Endothelial cell of umbilical vein (primary cell): ENCODE measurements at regions of chrX and their contacts with region 1.

Region 1: DNA sequence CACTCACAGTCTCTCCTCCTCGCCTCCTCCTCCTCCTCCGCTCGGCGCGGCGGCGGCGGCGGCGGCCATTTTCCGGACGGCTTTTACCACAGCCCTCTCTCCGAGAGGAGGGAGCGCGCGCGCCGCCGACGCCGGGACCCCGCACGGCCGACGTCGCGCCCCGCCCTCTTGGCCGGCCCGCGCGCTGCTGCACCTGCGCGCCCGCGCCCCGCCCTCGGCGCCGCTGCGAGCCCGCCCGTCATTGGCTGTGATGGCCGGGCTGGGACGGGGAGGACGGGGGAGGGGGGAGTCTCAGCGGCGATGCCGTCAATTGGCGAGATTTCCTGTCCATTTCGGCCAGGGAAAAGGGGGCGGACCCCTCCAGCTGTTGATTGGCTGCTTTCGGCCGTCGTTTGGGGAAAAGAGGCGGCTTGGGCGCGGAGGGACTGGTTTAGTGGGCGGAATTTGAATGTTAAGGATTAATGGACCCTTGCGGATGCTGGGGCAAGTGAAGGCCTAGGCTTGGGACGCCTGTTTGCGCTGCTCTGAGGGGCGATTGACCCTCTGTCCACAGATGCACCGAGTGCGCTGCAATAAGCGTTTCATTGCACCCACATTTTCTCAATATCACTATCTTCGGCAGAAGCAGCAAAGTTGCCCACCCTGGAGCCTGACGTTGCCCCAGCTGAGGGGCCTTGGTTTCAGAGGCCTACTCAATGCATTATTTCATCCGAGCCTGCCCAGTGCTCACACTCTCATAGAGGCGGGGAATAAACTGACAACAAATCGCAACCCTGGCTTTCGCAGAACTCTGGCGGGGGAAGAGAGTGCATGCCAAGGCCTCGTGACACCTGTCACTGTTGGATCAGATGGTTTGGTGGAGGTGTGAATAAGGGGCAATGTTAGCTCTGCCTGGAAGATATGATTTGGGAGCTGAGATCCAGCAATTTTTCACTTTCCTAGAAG is at the start of gene MECP2:
- DNase-seq: peak; percentile 92
- H3K4me3 ChIP-seq: peak within 1 kb of the TSS; percentile 71 to 76 (median 74)
- H3K27ac ChIP-seq: peak within 1 kb of the TSS; percentile 45
- H3K4me1 ChIP-seq: peaks cover 24% of the 10 kb centered on the region
- H3K27me3 ChIP-seq: peaks cover 0 to 3% of the 10 kb centered on the region in 2 experiments
- CTCF ChIP-seq: no peak
- POLR2A ChIP-seq: no peak
- total RNA-seq, gene MECP2: 40.9 and 45.3 TPM in 2 replicates

Region 2: DNA sequence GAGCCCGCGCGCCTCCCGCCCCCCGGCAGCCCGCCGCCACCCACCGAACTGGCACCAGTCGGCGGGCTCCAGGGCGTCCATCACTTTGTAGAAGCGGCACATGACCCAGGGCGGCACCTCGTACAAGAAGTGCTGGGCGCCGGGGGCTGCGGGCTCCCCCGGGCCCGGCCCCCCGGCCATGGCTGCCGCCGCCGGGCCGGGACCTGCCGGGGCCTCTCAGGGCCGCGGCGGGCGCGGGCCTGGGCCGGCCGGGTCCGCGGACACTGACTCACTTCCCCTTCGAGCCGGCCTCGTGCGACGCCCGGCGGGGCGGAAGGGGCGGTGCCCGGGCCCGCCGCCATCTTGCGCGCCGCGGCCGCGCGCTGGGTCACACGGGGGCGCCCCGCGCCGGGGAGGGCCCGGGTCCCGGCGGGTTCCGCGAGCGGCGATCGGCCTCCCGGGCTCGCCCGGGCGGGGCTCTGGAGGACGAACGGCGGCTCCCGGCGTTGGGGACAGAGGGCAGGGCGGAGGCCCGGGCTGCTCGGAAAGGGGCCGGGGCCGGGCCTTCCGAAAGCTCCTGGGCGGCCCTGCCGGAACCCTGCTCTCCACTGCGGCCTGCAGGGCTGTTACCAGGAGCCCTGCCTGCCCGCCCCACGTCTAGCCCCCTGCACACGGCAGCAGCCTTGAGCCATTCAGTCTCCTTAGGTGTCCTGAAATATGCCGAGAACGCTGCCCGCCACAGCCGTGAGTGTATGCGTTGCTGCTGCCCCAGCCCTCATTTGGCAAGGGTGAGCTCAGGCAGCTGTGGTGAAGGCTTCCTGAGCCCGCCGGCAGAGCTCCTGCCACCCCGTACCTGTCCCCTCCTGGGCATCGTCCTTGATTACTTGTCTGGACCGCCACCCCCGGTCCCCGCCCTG is 78.0 kb before region 1 on chrX and contains the start of gene IRAK1:
- CTCF ChIA-PET with region 1: no interaction called
- POLR2A ChIA-PET with region 1: no interaction called
- dilution Hi-C with region 1: no loop called
- intact Hi-C with region 1: loop called (anchors 2 kb)
- DNase-seq: peak; percentile 37
- H3K4me3 ChIP-seq: peak within 1 kb of the TSS; percentile 44 to 69 (median 59)
- H3K27ac ChIP-seq: peak within 1 kb of the TSS; percentile 90
- H3K4me1 ChIP-seq: peaks cover 25% of the 10 kb centered on the region
- H3K27me3 ChIP-seq: no peaks in the 10 kb centered on the region
- CTCF ChIP-seq: no peak
- POLR2A ChIP-seq: no peak
- total RNA-seq, gene IRAK1: 136 and 138 TPM in 2 replicates

Region 3: DNA sequence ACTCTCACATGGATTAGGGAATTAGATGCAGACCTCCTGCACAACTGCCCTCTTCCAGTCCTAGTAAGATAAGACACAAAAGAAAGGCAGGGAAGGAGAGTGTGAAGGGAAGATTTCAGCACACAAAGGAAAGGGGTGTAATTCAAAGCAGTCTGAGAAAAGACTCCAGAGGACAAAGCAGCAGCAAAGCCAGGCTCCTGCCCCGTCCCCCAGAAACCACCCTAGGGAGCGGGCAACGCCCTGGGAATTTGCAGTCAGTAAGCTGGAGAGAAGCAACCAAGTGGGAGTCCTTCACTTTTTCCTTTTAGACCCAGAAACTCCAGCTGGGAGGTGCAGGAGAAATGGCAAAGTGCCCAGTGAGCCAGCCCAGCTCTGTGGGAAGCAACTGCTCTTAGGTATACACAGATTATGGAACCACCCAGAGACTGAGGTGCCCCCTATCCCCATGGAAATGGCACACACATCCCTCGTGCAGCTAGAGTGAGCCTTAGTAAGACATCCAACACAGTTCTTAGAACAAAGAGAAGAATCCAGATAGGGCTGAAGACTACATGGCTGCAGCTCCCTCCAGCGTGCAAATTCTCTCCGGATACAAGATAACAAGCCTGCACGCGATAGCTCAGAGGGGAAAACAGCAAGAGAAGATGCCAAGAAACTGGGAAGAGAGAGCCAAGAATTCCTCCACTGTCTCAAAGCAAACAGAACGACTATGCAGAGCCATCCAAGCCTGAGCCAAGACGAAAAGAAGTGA is 51.7 kb before region 1 on chrX:
- CTCF ChIA-PET with region 1: no interaction called
- POLR2A ChIA-PET with region 1: no interaction called
- dilution Hi-C with region 1: no loop called
- intact Hi-C with region 1: loop called (anchors 2 kb)
- DNase-seq: peak; percentile 93
- H3K4me3 ChIP-seq: no peak overlapping the region
- H3K27ac ChIP-seq: peak overlapping the region; percentile 87
- H3K4me1 ChIP-seq: peaks cover 32% of the 10 kb centered on the region
- H3K27me3 ChIP-seq: no peaks in the 10 kb centered on the region
- CTCF ChIP-seq: peak in 1 of 2 donors; percentile 15
- POLR2A ChIP-seq: no peak

Region 4: DNA sequence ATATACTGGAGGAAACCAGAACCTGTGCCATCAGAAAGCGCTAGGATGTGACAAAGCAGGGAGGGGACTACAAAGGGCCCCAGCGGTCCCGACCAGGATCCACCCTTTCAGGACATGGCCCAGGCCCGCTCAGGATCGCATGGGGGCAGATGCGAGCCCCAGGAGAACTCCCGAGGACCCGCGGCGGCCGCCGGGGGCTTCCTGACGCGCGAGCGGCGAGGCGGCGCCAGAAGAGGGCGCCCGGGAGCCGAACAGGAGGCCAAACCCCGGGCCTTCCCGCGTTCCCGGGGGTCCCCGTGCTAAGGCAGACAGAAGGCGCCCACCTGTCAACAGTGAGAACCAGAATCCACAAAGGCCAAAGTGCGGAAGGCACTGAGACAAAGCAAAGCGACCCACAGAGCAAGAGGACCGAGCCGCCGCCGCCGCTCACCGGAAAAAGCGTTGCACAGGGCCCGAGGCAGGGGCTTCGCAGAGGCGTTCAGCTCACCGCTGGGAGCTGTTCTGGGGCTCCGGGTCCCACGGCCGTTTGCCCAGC is 38.8 kb after region 1 on chrX:
- CTCF ChIA-PET with region 1: interaction called, 3 read pairs
- POLR2A ChIA-PET with region 1: no interaction called
- dilution Hi-C with region 1: no loop called
- intact Hi-C with region 1: loop called (anchors 1 kb)
- DNase-seq: peak; percentile 54
- H3K4me3 ChIP-seq: peak overlapping the region in 1 of 3 experiments; percentile 21
- H3K27ac ChIP-seq: peak overlapping the region; percentile 13
- H3K4me1 ChIP-seq: peaks cover 13% of the 10 kb centered on the region
- H3K27me3 ChIP-seq: no peaks in the 10 kb centered on the region
- CTCF ChIP-seq: peak; percentile 76 to 78
- POLR2A ChIP-seq: no peak